Heart right ventricle (tissue), 16 donors: ENCODE measurements at regions of chr9 and their contacts with region 1.

Region 1: GRCh38 chr9:115400796-115401195 is 282.8 kb upstream of the TNC start:
- DNase-seq: no peak
- ATAC-seq: peak in 1 of 8 donors; percentile 40
- H3K4me3 ChIP-seq: no peak overlapping the region
- H3K27ac ChIP-seq: no peak overlapping the region
- H3K4me1 ChIP-seq: peaks cover 0 to 12% (median 1%) of the 10 kb centered on the region in 9 donors
- H3K27me3 ChIP-seq: no peaks in the 10 kb centered on the region
- CTCF ChIP-seq: no peak

Region 2: DNA sequence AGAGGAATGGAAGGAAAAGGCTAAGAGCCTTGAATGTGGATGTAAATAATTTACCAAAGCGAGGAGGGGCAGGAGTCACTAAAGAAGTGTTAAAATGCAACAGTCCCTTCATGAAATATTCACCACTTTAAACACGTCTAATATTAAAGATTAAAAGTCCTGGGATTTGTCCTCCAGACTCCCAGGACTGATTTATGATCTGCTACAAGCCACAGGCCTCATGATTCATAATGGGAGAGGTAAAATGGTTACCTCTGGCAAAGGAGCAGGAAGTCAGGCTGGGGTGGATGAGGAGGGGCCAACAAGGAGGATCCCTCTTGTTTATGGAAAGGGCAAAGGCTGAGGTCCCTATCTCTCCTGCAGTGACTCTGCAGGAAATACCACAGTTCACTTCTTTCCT is 1578.7 kb after region 1 on chr9:
- intact Hi-C with region 1: loop called in 1 of 10 experiments (anchors 5 kb)
- DNase-seq: no peak
- ATAC-seq: no peak
- H3K4me3 ChIP-seq: no peak overlapping the region
- H3K27ac ChIP-seq: no peak overlapping the region
- H3K4me1 ChIP-seq: no peaks in the 10 kb centered on the region
- H3K27me3 ChIP-seq: peaks cover 0 to 3% (median 0%) of the 10 kb centered on the region in 7 donors
- CTCF ChIP-seq: no peak